ENCODE measurements at regions of chr15 and their contacts with region 1.

Region 1: GRCh38 chr15:67784090-67784781 is 41.1 kb upstream of the SKOR1 start:
- DNase-seq: peak; percentile 40
- ATAC-seq: peak; percentile 42
- H3K4me3 Mint-ChIP-seq: no peak overlapping the region
- H3K27ac Mint-ChIP-seq: peak overlapping the region; percentile 39
- H3K4me1 Mint-ChIP-seq: peaks cover 34% of the 10 kb centered on the region
- H3K27me3 Mint-ChIP-seq: no peaks in the 10 kb centered on the region

Region 2: GRCh38 chr15:67771189-67771800 is 12.9 kb before region 1 on chr15:
- CTCF ChIA-PET with region 1: interaction called, 17 read pairs
- POLR2A ChIA-PET with region 1: no interaction called
- DNase-seq: no peak
- ATAC-seq: no peak
- H3K4me3 Mint-ChIP-seq: no peak overlapping the region
- H3K27ac Mint-ChIP-seq: no peak overlapping the region
- H3K4me1 Mint-ChIP-seq: peaks cover 2% of the 10 kb centered on the region
- H3K27me3 Mint-ChIP-seq: no peaks in the 10 kb centered on the region

Region 3: GRCh38 chr15:67796196-67797127 is 12.2 kb after region 1 on chr15:
- CTCF ChIA-PET with region 1: interaction called, 10 read pairs
- POLR2A ChIA-PET with region 1: no interaction called
- DNase-seq: no peak
- ATAC-seq: no peak
- H3K4me3 Mint-ChIP-seq: no peak overlapping the region
- H3K27ac Mint-ChIP-seq: no peak overlapping the region
- H3K4me1 Mint-ChIP-seq: no peaks in the 10 kb centered on the region
- H3K27me3 Mint-ChIP-seq: no peaks in the 10 kb centered on the region

Region 4: DNA sequence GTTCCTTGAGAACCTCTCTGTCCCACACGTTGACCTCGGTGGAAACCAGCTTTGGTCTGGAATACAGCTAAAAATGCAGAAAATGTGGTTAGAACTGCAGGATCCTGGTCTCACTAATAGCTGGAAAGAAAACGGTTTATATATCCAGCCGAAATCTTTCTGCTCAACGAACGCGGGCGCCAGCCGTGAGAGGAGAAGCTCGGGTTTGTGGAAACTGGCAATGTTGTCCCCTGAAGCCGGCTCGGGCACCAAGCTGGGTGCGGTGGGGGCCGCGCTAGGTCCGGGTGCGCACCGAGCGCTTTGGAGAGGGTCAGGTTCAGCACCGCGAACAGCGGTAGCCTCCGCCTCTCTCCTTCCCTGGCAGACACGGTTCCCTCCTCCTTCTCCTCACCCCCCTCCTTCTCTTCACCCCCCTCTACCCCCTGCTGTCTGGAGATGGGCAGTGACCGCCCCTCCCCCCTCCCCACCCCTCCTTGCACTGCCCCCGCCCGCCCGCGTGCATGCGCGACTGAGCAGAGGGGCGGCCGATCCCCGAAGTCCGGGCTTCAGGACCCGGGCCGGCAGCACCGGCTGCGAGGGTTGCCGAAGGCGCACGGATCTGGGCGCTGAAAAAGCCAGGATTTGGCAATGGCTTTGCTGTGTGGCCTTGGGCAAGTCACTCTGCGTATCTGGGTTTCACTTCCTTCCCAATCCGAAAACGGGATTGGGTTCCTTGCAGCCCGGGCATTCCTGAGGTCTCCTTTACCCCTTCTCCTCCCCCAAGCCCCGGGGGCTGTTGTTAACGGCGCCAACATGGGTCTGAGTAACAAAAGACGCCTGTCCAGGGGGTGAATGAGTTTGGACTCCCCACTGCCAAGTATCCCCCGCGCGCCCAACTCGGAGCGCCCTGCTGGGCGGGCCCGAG is 41.0 kb after region 1 on chr15 and contains the start of gene SKOR1:
- CTCF ChIA-PET with region 1: interaction called, 15 read pairs
- POLR2A ChIA-PET with region 1: no interaction called
- DNase-seq: no peak
- ATAC-seq: no peak
- H3K4me3 Mint-ChIP-seq: peak within 1 kb of the TSS; percentile 59
- H3K27ac Mint-ChIP-seq: peak within 1 kb of the TSS; percentile 80
- H3K4me1 Mint-ChIP-seq: peaks cover 44% of the 10 kb centered on the region
- H3K27me3 Mint-ChIP-seq: peaks cover 75% of the 10 kb centered on the region
- total RNA-seq, gene SKOR1: 0.21 to 0.32 TPM

Region 5: DNA sequence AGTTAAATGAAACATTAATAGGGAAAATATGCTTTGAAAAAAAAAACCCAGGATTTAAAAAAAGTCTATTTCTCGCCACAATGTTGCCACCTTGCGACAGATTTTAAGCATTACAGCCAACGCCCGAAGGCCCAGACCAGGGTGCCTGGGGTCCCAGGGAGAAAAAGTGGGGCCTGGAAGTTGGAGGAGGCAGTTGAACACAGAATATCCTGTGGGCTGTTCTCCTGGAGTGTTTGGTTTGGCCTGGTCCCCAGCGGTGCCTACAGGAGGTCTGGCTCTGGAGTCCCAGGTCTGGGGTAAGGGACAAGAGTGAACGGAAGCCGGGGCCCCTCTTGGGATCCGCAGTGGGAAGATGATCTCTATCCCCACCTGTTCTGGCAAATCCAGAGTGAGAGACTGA is 52.2 kb after region 1 on chr15:
- CTCF ChIA-PET with region 1: interaction called, 25 read pairs
- POLR2A ChIA-PET with region 1: no interaction called
- DNase-seq: peak; percentile 66
- ATAC-seq: no peak
- H3K4me3 Mint-ChIP-seq: peak overlapping the region; percentile 66
- H3K27ac Mint-ChIP-seq: no peak overlapping the region
- H3K4me1 Mint-ChIP-seq: peaks cover 53% of the 10 kb centered on the region
- H3K27me3 Mint-ChIP-seq: peaks cover 58% of the 10 kb centered on the region

Measured in activated CD8-positive, alpha-beta T cell treated with anti-CD3 and anti-CD28 coated beads, Interleukin-2, amount 10 ng/mL, durations not matched to agents 7 days and 5 days (primary cell).